Left ventricle myocardium inferior (tissue), 1 donor: ENCODE measurements at regions of chr12 and their contacts with region 1.

Region 1: GRCh38 chr12:25436203-25437030 is 116.7 kb downstream of the LMNTD1 start:
- DNase-seq: no peak
- H3K4me3 ChIP-seq: peak overlapping the region; percentile 52
- H3K27ac ChIP-seq: no peak overlapping the region
- H3K4me1 ChIP-seq: peaks cover 3% of the 10 kb centered on the region
- H3K27me3 ChIP-seq: no peaks in the 10 kb centered on the region
- CTCF ChIP-seq: peak; percentile 85

Region 2: DNA sequence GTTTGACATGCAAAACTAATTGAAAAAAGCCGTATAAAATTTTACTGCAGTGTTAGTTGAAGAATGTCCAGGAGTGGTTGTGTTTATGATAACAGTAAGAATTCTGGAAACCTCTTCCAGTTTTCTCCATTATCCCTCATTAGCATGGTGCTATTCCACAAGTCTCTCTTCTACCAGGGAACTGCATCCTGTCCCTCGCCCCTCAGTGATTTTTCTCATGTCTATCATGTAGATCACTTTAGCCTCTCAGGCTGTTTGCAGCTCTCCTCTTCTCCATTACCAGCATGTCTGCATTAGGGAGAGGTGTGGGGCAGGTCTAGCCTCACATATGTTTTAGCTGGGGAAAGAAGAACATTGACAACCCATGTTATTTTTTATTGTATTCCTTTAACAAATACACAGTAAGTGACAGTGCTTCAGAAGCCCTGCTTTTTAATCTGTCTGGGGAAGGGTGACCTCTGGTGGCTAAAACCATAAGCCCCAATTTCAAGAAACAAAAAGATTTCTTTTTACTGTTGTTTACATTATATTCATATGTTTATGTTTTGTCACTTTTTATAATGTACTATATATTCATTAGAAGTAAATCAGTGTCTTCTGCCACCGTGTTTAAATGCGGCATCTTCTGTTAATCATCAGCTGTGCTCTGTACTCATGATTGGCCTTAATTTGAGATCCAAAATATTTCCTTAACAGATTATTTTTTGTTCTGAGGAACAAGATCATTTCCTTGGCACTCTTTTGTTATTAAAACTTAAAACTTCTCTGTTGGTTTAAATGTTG is 592.7 kb after region 1 on chr12:
- intact Hi-C with region 1: loop called (anchors 5 kb)
- DNase-seq: no peak
- H3K4me3 ChIP-seq: no peak overlapping the region
- H3K27ac ChIP-seq: peak overlapping the region; percentile 9
- H3K4me1 ChIP-seq: peaks cover 29% of the 10 kb centered on the region
- H3K27me3 ChIP-seq: no peaks in the 10 kb centered on the region
- CTCF ChIP-seq: peak; percentile 89